GM10248 (cell line): ENCODE measurements at regions of chr4 and their contacts with region 1.

Region 1: GRCh38 chr4:153344131-153345010 is at the start of gene MND1:
- DNase-seq: peak; percentile 93
- CTCF ChIP-seq: peak; percentile 72

Region 2: GRCh38 chr4:153643406-153644383 is 299.3 kb after region 1 on chr4:
- CTCF ChIA-PET with region 1: interaction called, 48 read pairs
- POLR2A ChIA-PET with region 1: no interaction called
- DNase-seq: peak; percentile 74
- CTCF ChIP-seq: peak; percentile 53